ENCODE measurements at regions of chr12 and their contacts with region 1.

Region 1: GRCh38 chr12:21169878-21170472 is 39.0 kb downstream of the SLCO1B1 start:
- DNase-seq: peak in 2 of 9 donors; percentile 1 to 27
- ATAC-seq: no peak
- H3K4me3 ChIP-seq: no peak overlapping the region
- H3K4me3 Mint-ChIP-seq: no peak overlapping the region
- H3K27ac ChIP-seq: no peak overlapping the region
- H3K27ac Mint-ChIP-seq: no peak overlapping the region
- H3K4me1 ChIP-seq: no peaks in the 10 kb centered on the region
- H3K4me1 Mint-ChIP-seq: no peaks in the 10 kb centered on the region
- H3K27me3 ChIP-seq: no peaks in the 10 kb centered on the region
- H3K27me3 Mint-ChIP-seq: peaks cover 0 to 4% (median 0%) of the 10 kb centered on the region in 5 donors

Region 2: GRCh38 chr12:19739183-19739776 is 1430.7 kb before region 1 on chr12:
- CTCF ChIA-PET with region 1: no interaction called
- POLR2A ChIA-PET with region 1: no interaction called
- intact Hi-C with region 1: loop called in 1 of 2 experiments (anchors 2 kb)
- DNase-seq: peak in 3 of 9 donors; percentile 1 to 16 (median 5)
- ATAC-seq: no peak
- H3K4me3 ChIP-seq: no peak overlapping the region
- H3K4me3 Mint-ChIP-seq: no peak overlapping the region
- H3K27ac ChIP-seq: no peak overlapping the region
- H3K27ac Mint-ChIP-seq: no peak overlapping the region
- H3K4me1 ChIP-seq: no peaks in the 10 kb centered on the region
- H3K4me1 Mint-ChIP-seq: no peaks in the 10 kb centered on the region
- H3K27me3 ChIP-seq: no peaks in the 10 kb centered on the region
- H3K27me3 Mint-ChIP-seq: peaks cover 0 to 10% (median 4%) of the 10 kb centered on the region in 5 donors

Region 3: DNA sequence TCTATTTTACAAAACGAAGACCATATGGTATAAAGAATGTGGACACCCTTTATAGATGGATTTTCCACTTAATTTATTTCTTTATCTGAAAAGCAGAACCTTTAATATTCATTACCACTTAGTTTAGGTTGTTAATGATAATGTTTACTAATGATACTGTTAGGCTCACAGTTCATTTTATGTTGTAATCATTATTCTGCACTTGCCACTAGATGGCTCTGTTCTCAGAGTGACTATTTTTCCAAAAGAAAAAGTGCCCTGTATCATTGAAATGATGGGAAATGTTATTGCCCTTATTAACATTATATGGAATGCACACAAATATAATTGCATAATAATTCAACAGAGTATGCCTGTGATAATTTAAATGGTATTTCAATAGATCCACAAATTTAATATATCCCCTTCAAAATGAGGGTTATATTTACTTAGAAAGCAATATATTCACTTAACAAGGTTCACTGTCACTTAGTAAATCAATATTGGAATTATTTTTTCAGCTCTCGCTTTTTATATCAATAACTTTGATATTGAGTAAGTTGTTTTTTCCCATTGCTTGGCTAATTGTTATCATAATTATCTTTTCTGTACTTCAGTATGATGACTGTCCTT is 706.0 kb before region 1 on chr12:
- CTCF ChIA-PET with region 1: no interaction called
- POLR2A ChIA-PET with region 1: no interaction called
- intact Hi-C with region 1: loop called in 1 of 2 experiments (anchors 5 kb)
- DNase-seq: peak in 1 of 9 donors; percentile 8
- ATAC-seq: no peak
- H3K4me3 ChIP-seq: no peak overlapping the region
- H3K4me3 Mint-ChIP-seq: no peak overlapping the region
- H3K27ac ChIP-seq: no peak overlapping the region
- H3K27ac Mint-ChIP-seq: no peak overlapping the region
- H3K4me1 ChIP-seq: no peaks in the 10 kb centered on the region
- H3K4me1 Mint-ChIP-seq: no peaks in the 10 kb centered on the region
- H3K27me3 ChIP-seq: no peaks in the 10 kb centered on the region
- H3K27me3 Mint-ChIP-seq: no peaks in the 10 kb centered on the region

Region 4: GRCh38 chr12:20646239-20646827 is 523.6 kb before region 1 on chr12:
- CTCF ChIA-PET with region 1: no interaction called
- POLR2A ChIA-PET with region 1: no interaction called
- intact Hi-C with region 1: loop called in 1 of 2 experiments (anchors 1 kb)
- DNase-seq: no peak
- ATAC-seq: no peak
- H3K4me3 ChIP-seq: no peak overlapping the region
- H3K4me3 Mint-ChIP-seq: no peak overlapping the region
- H3K27ac ChIP-seq: no peak overlapping the region
- H3K27ac Mint-ChIP-seq: no peak overlapping the region
- H3K4me1 ChIP-seq: no peaks in the 10 kb centered on the region
- H3K4me1 Mint-ChIP-seq: peaks cover 0 to 2% (median 0%) of the 10 kb centered on the region in 7 donors
- H3K27me3 ChIP-seq: no peaks in the 10 kb centered on the region
- H3K27me3 Mint-ChIP-seq: no peaks in the 10 kb centered on the region

Region 5: DNA sequence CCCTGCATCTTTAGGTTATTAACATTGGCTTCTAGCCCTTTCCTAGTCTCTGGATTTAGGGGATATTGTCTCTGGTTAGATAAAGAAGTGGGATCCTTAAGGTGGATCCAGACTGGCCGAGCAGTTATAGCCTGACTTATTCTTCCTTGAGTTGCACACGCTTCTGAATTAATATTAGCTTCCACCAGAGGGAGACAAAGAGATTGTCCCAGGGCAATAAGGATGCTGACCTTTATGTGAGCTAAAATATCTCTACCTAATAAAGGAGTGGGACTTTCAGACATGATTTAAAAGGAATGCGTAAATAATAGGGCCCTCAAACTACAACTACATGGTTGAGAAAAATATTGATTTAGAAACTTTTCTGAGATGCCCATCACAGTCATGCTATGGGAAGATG is 219.7 kb before region 1 on chr12:
- CTCF ChIA-PET with region 1: no interaction called
- POLR2A ChIA-PET with region 1: no interaction called
- intact Hi-C with region 1: loop called in 1 of 2 experiments (anchors 1 kb)
- DNase-seq: no peak
- ATAC-seq: no peak
- H3K4me3 ChIP-seq: no peak overlapping the region
- H3K4me3 Mint-ChIP-seq: no peak overlapping the region
- H3K27ac ChIP-seq: no peak overlapping the region
- H3K27ac Mint-ChIP-seq: no peak overlapping the region
- H3K4me1 ChIP-seq: no peaks in the 10 kb centered on the region
- H3K4me1 Mint-ChIP-seq: peaks cover 0 to 1% (median 0%) of the 10 kb centered on the region in 7 donors
- H3K27me3 ChIP-seq: no peaks in the 10 kb centered on the region
- H3K27me3 Mint-ChIP-seq: peaks cover 0 to 5% (median 0%) of the 10 kb centered on the region in 5 donors

Region 6: DNA sequence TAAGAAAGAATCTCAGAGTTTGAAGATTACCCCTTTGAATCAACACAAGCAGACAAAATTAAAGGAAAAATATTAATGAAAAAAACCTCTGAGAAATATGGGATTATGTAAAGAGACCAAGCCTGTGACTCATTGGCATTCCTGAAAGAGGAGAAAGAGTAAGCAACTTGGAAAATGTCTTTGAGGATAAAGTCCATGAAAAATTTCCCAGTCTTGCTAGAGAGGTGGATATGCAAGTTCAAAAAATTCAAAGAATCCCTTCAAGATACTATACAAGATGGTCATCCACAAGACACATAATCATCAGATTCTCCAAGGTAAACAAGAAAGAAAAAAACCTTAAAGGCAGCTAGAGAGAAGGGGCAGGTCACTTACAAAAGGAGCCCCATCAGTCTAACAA is 25.7 kb before region 1 on chr12:
- CTCF ChIA-PET with region 1: no interaction called
- POLR2A ChIA-PET with region 1: no interaction called
- intact Hi-C with region 1: no loop called
- DNase-seq: no peak
- ATAC-seq: no peak
- H3K4me3 ChIP-seq: no peak overlapping the region
- H3K4me3 Mint-ChIP-seq: no peak overlapping the region
- H3K27ac ChIP-seq: no peak overlapping the region
- H3K27ac Mint-ChIP-seq: no peak overlapping the region
- H3K4me1 ChIP-seq: no peaks in the 10 kb centered on the region
- H3K4me1 Mint-ChIP-seq: no peaks in the 10 kb centered on the region
- H3K27me3 ChIP-seq: no peaks in the 10 kb centered on the region
- H3K27me3 Mint-ChIP-seq: no peaks in the 10 kb centered on the region

Region 7: DNA sequence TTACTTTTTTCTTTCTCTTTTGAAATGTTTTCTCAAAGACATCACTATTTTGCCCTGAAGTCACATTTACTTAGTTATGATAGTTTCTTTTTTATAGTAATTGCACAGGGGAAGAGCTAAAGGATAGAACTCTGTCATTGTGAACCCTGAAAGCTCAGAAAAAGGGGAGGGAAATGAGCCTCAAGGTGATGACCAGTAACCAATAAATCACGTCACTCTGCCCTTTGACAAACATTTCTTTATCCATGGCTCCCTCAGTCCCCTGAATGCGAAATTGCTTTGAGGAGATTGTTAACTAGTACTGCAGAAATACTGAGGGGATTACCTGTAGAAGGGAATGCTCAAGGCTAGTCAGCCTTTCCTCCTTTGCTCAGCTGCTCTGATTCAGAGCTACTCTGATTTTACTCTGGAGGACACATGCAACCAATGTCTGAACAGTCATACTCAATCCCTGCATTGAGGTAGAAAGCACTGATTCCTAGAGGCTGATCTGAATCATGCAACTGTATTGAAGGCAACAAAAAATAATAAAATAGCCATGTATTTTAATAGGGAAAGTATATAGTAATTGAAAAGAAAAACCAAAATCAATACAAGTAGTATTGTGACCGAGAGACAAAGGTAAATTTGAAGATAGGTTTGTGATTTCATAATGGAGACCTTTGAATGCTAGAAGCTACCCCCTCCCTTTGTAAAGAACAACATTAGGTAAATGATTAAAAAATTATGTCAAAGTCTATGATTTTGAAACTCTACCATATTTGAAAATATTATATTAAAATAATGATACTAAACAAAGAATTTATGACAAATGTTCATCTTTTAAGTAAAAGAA is 14.2 kb before region 1 on chr12:
- CTCF ChIA-PET with region 1: no interaction called
- POLR2A ChIA-PET with region 1: no interaction called
- intact Hi-C with region 1: no loop called
- DNase-seq: no peak
- ATAC-seq: no peak
- H3K4me3 ChIP-seq: no peak overlapping the region
- H3K4me3 Mint-ChIP-seq: no peak overlapping the region
- H3K27ac ChIP-seq: no peak overlapping the region
- H3K27ac Mint-ChIP-seq: no peak overlapping the region
- H3K4me1 ChIP-seq: no peaks in the 10 kb centered on the region
- H3K4me1 Mint-ChIP-seq: peaks cover 0 to 5% (median 0%) of the 10 kb centered on the region in 7 donors
- H3K27me3 ChIP-seq: no peaks in the 10 kb centered on the region
- H3K27me3 Mint-ChIP-seq: no peaks in the 10 kb centered on the region